ENCODE measurements at regions of chr1 and their contacts with region 1.

Region 1: GRCh38 chr1:194056169-194056568 is 869.8 kb upstream of the B3GALT2 start:
- DNase-seq: no peak

Region 2: GRCh38 chr1:193971595-193971994 is 84.6 kb before region 1 on chr1:
- intact Hi-C with region 1: loop called (anchors 5 kb)
- DNase-seq: no peak